ENCODE measurements at regions of chr2 and their contacts with region 1.

Region 1: GRCh38 chr2:8621072-8621382 is 60.8 kb upstream of the ID2 start:
- DNase-seq: no peak
- ATAC-seq: no peak
- H3K4me3 ChIP-seq: no peak overlapping the region
- H3K27ac ChIP-seq: no peak overlapping the region
- H3K4me1 ChIP-seq: no peaks in the 10 kb centered on the region
- H3K27me3 ChIP-seq: peaks cover 0 to 8% of the 10 kb centered on the region in 2 experiments; a peak in 2 of 4 replicates
- CTCF ChIP-seq: no peak
- EP300 ChIP-seq: no peak
- POLR2A ChIP-seq: no peak
- RAD21 ChIP-seq: no peak

Region 2: DNA sequence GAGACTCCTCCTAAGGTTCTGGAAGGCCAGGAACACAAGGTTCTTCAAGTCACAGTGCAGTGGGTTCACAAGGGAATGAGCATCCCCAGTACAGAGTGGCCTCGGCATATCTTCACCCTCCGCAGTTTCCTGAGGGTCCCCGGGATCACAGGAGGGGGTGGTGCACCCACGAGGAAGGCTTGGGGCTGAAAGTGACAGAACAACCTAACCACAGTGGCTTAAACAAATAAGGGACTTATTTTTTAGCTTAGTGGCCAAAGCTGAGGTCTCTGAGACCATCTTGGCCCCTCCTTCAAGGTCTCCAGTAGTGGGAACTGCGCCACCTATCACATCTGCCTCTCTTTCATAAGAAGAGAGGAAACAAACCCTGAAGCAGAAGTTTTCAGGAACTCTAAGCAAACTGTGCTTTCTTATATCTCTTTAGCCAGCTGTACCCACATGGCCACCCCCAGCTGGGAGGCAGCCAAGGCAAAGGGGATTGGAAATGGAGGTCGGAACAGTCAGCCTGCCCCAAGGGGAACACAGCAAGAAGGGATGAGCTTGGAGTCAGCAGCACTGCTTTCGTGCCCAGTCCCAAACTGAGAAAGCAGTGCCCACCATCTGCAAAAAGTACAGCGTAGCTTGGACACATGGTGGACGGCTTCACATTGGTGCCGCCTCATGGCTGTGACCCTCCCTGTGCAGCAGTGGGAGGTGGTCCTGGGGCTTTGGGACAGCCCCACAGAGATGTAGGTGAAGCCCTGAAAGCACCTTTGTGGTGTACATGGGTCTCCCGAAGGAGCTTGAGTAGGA is 199.2 kb before region 1 on chr2:
- CTCF ChIA-PET with region 1: no interaction called
- POLR2A ChIA-PET with region 1: no interaction called
- RAD21 ChIA-PET with region 1: no interaction called
- SMC1A ChIA-PET with region 1: no interaction called
- in situ Hi-C with region 1: no loop called
- intact Hi-C with region 1: no loop called
- DNase-seq: peak; percentile 71
- ATAC-seq: peak; percentile 85
- H3K4me3 ChIP-seq: no peak overlapping the region
- H3K27ac ChIP-seq: peak overlapping the region; percentile 46
- H3K4me1 ChIP-seq: peaks cover 16% of the 10 kb centered on the region
- H3K27me3 ChIP-seq: no peaks in the 10 kb centered on the region
- CTCF ChIP-seq: peak; percentile 26 to 44 (median 29); a peak in 5 of 6 replicates
- EP300 ChIP-seq: peak; percentile 56 to 80; a peak in 3 of 4 replicates
- POLR2A ChIP-seq: no peak
- RAD21 ChIP-seq: peak; percentile 49

Region 3: DNA sequence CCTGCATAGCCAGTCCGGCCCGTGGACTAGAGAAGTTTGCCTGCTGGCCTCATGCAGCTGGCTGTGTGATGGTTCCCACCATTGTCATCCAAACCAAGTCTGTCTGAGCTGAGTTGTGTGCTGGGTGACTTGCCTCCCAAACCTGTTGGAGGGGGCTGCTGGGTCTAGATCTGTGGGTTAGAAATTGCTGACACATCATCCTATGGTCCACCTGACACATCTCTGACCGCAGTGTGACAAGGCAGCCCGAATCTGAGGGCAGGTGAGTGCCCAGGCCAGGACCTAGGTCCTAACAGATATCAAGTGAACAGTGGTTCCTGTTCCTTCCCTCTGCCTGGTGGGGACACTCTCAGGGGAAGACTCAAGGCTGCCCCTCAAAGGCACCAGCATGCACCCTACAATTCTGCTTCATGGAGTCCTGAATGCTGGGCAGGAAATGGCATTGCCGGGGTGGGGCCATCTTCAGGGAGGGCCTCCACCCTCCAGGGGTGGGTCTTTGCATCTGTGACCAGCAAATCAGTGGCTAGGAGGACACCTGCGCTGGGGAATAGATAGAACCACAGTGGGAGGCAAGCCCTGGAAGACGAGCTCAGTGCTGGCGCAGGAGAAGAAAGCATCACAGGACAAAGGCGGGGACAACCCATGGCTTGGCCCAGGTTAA is 57.1 kb before region 1 on chr2:
- CTCF ChIA-PET with region 1: no interaction called
- POLR2A ChIA-PET with region 1: no interaction called
- RAD21 ChIA-PET with region 1: no interaction called
- SMC1A ChIA-PET with region 1: no interaction called
- in situ Hi-C with region 1: no loop called
- intact Hi-C with region 1: no loop called
- DNase-seq: no peak
- ATAC-seq: no peak
- H3K4me3 ChIP-seq: no peak overlapping the region
- H3K27ac ChIP-seq: no peak overlapping the region
- H3K4me1 ChIP-seq: no peaks in the 10 kb centered on the region
- H3K27me3 ChIP-seq: no peaks in the 10 kb centered on the region
- CTCF ChIP-seq: no peak
- EP300 ChIP-seq: no peak
- POLR2A ChIP-seq: no peak
- RAD21 ChIP-seq: no peak

Region 4: GRCh38 chr2:8633735-8634313 is 12.8 kb after region 1 on chr2:
- CTCF ChIA-PET with region 1: interaction called, 12 read pairs
- POLR2A ChIA-PET with region 1: interaction called, 3 read pairs
- RAD21 ChIA-PET with region 1: interaction called, 4 read pairs
- SMC1A ChIA-PET with region 1: interaction called, 5 read pairs
- in situ Hi-C with region 1: no loop called
- intact Hi-C with region 1: no loop called
- DNase-seq: no peak
- ATAC-seq: peak; percentile 75
- H3K4me3 ChIP-seq: no peak overlapping the region
- H3K27ac ChIP-seq: no peak overlapping the region
- H3K4me1 ChIP-seq: peaks cover 2% of the 10 kb centered on the region; the same call in 1 of the 2 replicates
- H3K27me3 ChIP-seq: no peaks in the 10 kb centered on the region; a peak in 1 of 4 replicates
- CTCF ChIP-seq: no peak
- EP300 ChIP-seq: no peak
- POLR2A ChIP-seq: no peak
- RAD21 ChIP-seq: no peak

Region 5: GRCh38 chr2:8701681-8702379 is 80.8 kb after region 1 on chr2:
- CTCF ChIA-PET with region 1: no interaction called
- POLR2A ChIA-PET with region 1: no interaction called
- RAD21 ChIA-PET with region 1: no interaction called
- SMC1A ChIA-PET with region 1: no interaction called
- in situ Hi-C with region 1: no loop called
- intact Hi-C with region 1: no loop called
- DNase-seq: no peak
- ATAC-seq: no peak
- H3K4me3 ChIP-seq: no peak overlapping the region
- H3K27ac ChIP-seq: no peak overlapping the region
- H3K4me1 ChIP-seq: no peaks in the 10 kb centered on the region
- H3K27me3 ChIP-seq: no peaks in the 10 kb centered on the region
- CTCF ChIP-seq: no peak
- EP300 ChIP-seq: no peak
- POLR2A ChIP-seq: no peak
- RAD21 ChIP-seq: no peak

Measured in GM12878 (cell line).